ENCODE measurements at regions of chr21 and their contacts with region 1.

Region 1: GRCh38 chr21:37873655-37874054 is 42.6 kb downstream of the KCNJ6 start:
- DNase-seq: no peak
- ATAC-seq: no peak
- H3K4me3 ChIP-seq: no peak overlapping the region
- H3K27ac ChIP-seq: no peak overlapping the region
- H3K4me1 ChIP-seq: no peaks in the 10 kb centered on the region
- H3K27me3 ChIP-seq: peaks cover 0 to 9% (median 0%) of the 10 kb centered on the region in 3 donors
- CTCF ChIP-seq: no peak

Region 2: DNA sequence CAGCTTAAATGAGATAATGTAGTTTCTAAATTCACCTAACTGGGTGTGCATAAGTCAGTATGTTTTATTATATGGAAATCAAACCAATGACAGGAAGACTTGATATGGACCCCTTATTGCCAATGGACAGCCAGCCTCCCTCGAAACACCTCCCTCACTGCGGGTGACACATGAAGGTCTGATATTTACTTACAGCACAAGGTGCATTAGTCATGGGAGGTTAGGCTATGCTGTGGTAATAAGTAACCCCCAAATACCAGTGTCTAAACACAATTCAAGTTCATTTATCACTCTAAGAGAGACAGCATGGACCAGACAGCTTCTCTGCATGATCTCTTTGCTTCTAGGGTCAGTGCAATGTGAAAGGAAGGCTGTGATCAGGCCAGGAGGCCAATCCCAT is 168.6 kb after region 1 on chr21:
- intact Hi-C with region 1: no loop called
- DNase-seq: no peak
- ATAC-seq: no peak
- H3K4me3 ChIP-seq: no peak overlapping the region
- H3K27ac ChIP-seq: no peak overlapping the region
- H3K4me1 ChIP-seq: no peaks in the 10 kb centered on the region
- H3K27me3 ChIP-seq: peaks cover 0 to 2% (median 0%) of the 10 kb centered on the region in 3 donors
- CTCF ChIP-seq: no peak

Region 3: DNA sequence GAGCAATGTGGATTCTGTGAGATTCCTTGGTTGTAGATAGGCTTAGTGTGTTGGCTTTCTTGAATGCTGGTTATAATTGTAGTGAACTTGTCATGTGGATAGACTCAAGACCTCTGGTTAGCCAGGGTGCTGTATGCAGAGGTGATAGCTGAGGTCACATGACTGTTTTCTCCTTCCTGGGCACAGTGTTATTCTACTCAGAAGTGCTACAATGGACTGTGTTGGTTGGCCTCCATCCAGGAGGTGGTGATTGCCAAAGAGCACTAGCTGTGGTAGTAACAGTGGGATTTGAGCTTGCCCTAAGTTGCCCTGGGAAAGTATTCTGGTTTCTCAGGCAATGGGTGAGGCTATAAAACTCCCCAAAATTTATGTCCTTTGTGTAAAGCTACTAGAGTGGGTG is 1649.7 kb after region 1 on chr21:
- intact Hi-C with region 1: loop called in 1 of 2 experiments (anchors 5 kb)
- DNase-seq: no peak
- ATAC-seq: peak in 1 of 4 donors; percentile 12
- H3K4me3 ChIP-seq: no peak overlapping the region
- H3K27ac ChIP-seq: no peak overlapping the region
- H3K4me1 ChIP-seq: peaks cover 33% of the 10 kb centered on the region
- H3K27me3 ChIP-seq: no peaks in the 10 kb centered on the region
- CTCF ChIP-seq: no peak

Measured in psoas muscle (tissue), 8 donors.